Cardiac septum (tissue), 1 donor: ENCODE measurements at regions of chr15 and their contacts with region 1.

Region 1: GRCh38 chr15:89057504-89058133 is 30.6 kb upstream of the ABHD2 start:
- DNase-seq: peak; percentile 93

Region 2: DNA sequence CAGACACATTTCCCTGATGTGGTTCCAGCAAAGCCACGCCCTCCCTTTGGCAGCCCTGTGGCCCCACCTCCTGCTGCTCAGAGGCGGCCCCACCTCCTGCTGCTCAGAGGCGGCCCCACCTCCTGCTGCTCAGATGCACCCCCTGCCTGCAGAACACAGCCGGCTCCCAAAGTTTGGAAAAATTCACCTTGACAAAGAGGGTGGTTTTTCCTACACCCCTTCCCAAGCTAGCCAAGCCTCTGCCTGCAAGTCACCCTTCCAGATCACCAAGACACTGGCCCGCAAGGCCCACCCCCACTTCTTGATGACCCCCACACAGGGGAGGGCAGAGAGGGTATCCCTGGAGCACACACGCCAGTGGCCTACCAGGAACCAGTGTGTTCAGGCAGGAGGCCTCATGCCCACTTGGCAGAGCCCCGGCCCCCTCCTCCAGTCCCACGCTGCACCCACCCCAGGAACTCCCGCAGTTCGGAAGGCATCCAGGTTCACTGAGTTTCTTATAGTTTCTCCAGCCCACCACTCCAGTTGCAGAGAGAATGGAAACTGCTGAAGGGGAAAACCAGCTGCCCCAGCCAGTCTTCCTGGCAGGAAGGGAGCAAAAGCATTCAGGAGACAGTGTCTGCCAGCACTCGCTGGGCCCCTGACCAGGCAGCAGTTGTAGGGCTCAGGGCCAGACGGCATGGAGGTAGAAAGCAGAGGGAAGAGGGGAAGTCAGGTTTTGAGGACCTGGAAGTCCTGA is 160.0 kb before region 1 on chr15:
- intact Hi-C with region 1: no loop called
- DNase-seq: peak; percentile 94

Region 3: GRCh38 chr15:89177633-89178306 is 120.2 kb after region 1 on chr15:
- intact Hi-C with region 1: loop called (anchors 1 kb)
- DNase-seq: no peak